HepG2 (cell line): ENCODE measurements at regions of chr6 and their contacts with region 1.

Region 1: GRCh38 chr6:63516186-63516944 is 55.9 kb upstream of the LOC128125822 start:
- DNase-seq: peak; percentile 100
- ATAC-seq: peak; percentile 51
- H3K4me3 ChIP-seq: peak overlapping the region; percentile 38 to 62 (median 38); a peak in 5 of 6 replicates
- H3K27ac ChIP-seq: peak overlapping the region; percentile 97
- H3K4me1 ChIP-seq: peaks cover 96% of the 10 kb centered on the region
- H3K27me3 ChIP-seq: no peaks in the 10 kb centered on the region
- CTCF ChIP-seq: 0 out of 2 replicates have a peak, but pooled peaks have one; percentile 3
- EP300 ChIP-seq: peak; percentile 73 to 99; a peak in 3 of 4 replicates
- POLR2A ChIP-seq: peak in 1 of 2 experiments; percentile 66; a peak in 2 of 4 replicates
- RAD21 ChIP-seq: peak; percentile 41; the same call in 1 of the 2 replicates

Region 2: GRCh38 chr6:63391203-63391970 is 125.0 kb before region 1 on chr6:
- CTCF ChIA-PET with region 1: no interaction called
- POLR2A ChIA-PET with region 1: interaction called, 18 read pairs
- in situ Hi-C with region 1: no loop called
- intact Hi-C with region 1: loop called (anchors 2 kb)
- DNase-seq: peak; percentile 99
- ATAC-seq: peak; percentile 95
- H3K4me3 ChIP-seq: no peak overlapping the region
- H3K27ac ChIP-seq: peak overlapping the region; percentile 83
- H3K4me1 ChIP-seq: peaks cover 56% of the 10 kb centered on the region
- H3K27me3 ChIP-seq: no peaks in the 10 kb centered on the region
- CTCF ChIP-seq: no peak
- EP300 ChIP-seq: peak; percentile 34 to 99; a peak in 2 of 4 replicates
- POLR2A ChIP-seq: 0 out of 4 replicates have a peak, but pooled peaks of 1 of the 2 experiments have one; percentile 18
- RAD21 ChIP-seq: peak; percentile 63

Region 3: GRCh38 chr6:63458480-63459115 is 57.8 kb before region 1 on chr6:
- CTCF ChIA-PET with region 1: no interaction called
- POLR2A ChIA-PET with region 1: interaction called, 38 read pairs
- in situ Hi-C with region 1: no loop called
- intact Hi-C with region 1: loop called (anchors 1 kb)
- DNase-seq: peak; percentile 99
- ATAC-seq: peak; percentile 99
- H3K4me3 ChIP-seq: peak overlapping the region in 2 of 3 experiments; percentile 13 to 14; a peak in 2 of 6 replicates
- H3K27ac ChIP-seq: peak overlapping the region; percentile 96
- H3K4me1 ChIP-seq: peaks cover 89% of the 10 kb centered on the region
- H3K27me3 ChIP-seq: no peaks in the 10 kb centered on the region
- CTCF ChIP-seq: no peak
- EP300 ChIP-seq: peak; percentile 99 to 100
- POLR2A ChIP-seq: peak; percentile 53 to 81; a peak in 3 of 4 replicates
- RAD21 ChIP-seq: no peak

Region 4: DNA sequence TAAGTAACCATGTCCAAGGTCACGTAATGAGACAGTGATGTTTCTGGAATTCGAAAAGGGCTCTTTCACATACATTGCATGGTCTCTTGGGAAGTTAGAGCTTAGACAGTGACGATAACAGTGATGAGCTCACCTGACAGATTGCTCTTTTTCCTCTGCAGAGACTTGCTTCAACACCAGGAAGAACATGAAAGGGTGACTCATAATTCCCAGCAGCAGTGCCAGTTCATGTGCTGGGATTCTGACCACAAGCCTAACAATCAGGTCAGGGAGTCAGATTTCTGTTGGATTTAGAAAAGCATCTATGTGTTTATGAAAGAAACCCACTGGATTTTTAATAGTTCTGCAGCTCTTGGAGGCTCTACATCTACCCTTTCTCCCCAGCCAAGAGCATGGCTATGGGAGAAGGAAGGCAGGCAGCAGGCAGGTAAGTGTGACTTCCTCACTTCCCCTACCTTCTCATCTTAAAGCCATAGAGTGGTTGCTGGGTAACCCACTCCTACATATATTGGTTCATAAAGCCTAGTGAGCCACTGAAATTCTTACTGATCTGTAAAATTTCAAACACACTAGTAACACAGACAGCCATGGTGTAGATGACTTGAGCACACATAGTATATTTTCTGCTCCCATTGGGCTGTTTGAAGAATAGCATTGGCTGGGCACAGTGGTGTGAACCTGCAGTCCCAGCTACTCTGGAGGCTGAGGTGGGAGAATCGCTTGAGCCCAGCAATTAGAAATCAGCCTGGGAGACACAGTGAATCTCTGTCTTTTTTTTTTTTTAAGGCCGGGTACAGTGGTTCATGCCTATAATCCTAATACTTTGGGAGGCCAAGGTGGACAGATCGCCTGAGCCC is 11.5 kb after region 1 on chr6:
- CTCF ChIA-PET with region 1: no interaction called
- POLR2A ChIA-PET with region 1: interaction called, 118 read pairs
- in situ Hi-C with region 1: no loop called
- intact Hi-C with region 1: loop called (anchors 1 kb)
- DNase-seq: peak; percentile 99
- ATAC-seq: peak; percentile 92
- H3K4me3 ChIP-seq: peak overlapping the region in 1 of 3 experiments; percentile 8; a peak in 1 of 6 replicates
- H3K27ac ChIP-seq: peak overlapping the region; percentile 82
- H3K4me1 ChIP-seq: peaks cover 80% of the 10 kb centered on the region
- H3K27me3 ChIP-seq: no peaks in the 10 kb centered on the region
- CTCF ChIP-seq: no peak
- EP300 ChIP-seq: peak; percentile 79 to 96; a peak in 3 of 4 replicates
- POLR2A ChIP-seq: peak in 1 of 2 experiments; percentile 34; a peak in 1 of 4 replicates
- RAD21 ChIP-seq: 0 out of 2 replicates have a peak, but pooled peaks have one; percentile 14

Region 5: GRCh38 chr6:63643862-63644261 is 127.5 kb after region 1 on chr6:
- CTCF ChIA-PET with region 1: no interaction called
- POLR2A ChIA-PET with region 1: no interaction called
- in situ Hi-C with region 1: no loop called
- intact Hi-C with region 1: loop called (anchors 2 kb)
- DNase-seq: no peak
- ATAC-seq: no peak
- H3K4me3 ChIP-seq: no peak overlapping the region
- H3K27ac ChIP-seq: no peak overlapping the region
- H3K4me1 ChIP-seq: peaks cover 69% of the 10 kb centered on the region
- H3K27me3 ChIP-seq: no peaks in the 10 kb centered on the region
- CTCF ChIP-seq: no peak
- EP300 ChIP-seq: no peak
- POLR2A ChIP-seq: no peak
- RAD21 ChIP-seq: no peak